Posterior cingulate gyrus (tissue), 11 donors: ENCODE measurements at regions of chr22 and their contacts with region 1.

Region 1: GRCh38 chr22:33519071-33519973 is 401.0 kb downstream of the LARGE1 start:
- DNase-seq: peak in 6 of 10 donors; percentile 16 to 81 (median 34)

Region 2: DNA sequence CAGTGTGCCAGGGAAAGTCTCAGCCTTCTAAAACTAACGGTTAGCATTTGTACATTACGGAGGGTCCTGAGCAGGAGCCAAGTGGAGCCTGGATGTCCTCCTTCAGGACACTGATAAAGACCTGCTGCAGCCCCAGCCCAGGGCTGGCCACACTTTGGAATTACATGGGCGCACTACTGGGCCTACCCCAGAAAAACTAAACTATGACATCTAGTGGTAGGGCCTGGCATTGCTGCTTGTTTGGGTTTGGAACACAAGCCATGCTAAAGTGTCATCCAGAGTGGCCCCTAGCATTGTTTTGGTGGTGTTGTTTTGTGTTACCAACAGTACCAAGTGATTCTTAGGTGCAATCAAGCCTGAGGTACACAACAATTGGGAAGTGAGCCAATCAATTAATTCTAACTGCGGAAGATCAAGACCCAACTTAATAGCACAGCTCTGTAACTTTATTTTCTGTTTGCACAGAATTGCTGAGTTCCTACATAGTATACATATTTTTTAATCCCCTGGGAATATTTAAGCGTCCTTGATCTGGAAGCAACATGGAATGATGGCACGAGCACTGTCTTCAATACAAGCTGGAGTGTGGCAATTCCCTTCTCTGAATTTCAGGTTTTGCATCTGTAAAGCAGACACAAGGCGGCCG is 60.2 kb after region 1 on chr22:
- intact Hi-C with region 1: loop called (anchors 1 kb)
- DNase-seq: peak in 6 of 10 donors; percentile 43 to 83 (median 65)